ENCODE measurements at regions of chr12 and their contacts with region 1.

Region 1: GRCh38 chr12:15584366-15585041 is 204.7 kb downstream of the EPS8 start:
- DNase-seq: peak; percentile 60
- H3K4me3 ChIP-seq: no peak overlapping the region
- CTCF ChIP-seq: peak; percentile 61

Region 2: GRCh38 chr12:15494329-15495046 is 90.0 kb before region 1 on chr12:
- CTCF ChIA-PET with region 1: no interaction called
- POLR2A ChIA-PET with region 1: no interaction called
- DNase-seq: no peak
- H3K4me3 ChIP-seq: no peak overlapping the region
- CTCF ChIP-seq: no peak

Region 3: GRCh38 chr12:15540469-15540872 is 44.0 kb before region 1 on chr12:
- CTCF ChIA-PET with region 1: interaction called, 542 read pairs
- POLR2A ChIA-PET with region 1: no interaction called
- DNase-seq: no peak
- H3K4me3 ChIP-seq: no peak overlapping the region
- CTCF ChIP-seq: no peak

Region 4: DNA sequence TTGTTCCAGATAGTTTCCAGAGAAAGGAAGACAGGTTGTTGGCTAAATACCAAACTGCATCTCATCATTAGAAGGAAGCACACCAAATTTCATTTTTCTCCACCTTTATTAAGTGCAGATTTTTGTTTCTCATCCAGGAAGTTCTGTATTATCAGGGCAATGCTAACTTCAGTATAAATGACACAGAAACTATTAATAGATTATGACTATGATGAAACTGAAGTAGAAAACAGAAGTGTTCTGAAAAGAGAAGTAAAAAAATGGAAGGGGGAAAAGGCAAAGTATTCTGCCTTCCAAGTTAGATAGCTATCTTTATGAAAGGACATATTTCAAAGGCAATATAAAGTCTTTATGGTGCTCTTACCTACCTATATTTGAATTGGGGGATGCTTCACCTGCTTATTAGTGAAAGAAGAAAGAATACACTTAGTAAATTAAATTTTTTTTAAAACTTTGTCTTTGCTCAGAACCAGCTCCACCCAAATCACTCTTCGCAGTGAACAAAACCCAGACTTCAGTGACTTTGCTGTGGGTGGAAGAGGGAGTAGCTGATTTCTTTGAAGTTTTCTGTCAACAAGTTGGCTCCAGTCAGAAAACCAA is 38.3 kb before region 1 on chr12:
- CTCF ChIA-PET with region 1: interaction called, 20 read pairs
- POLR2A ChIA-PET with region 1: no interaction called
- DNase-seq: no peak
- H3K4me3 ChIP-seq: no peak overlapping the region
- CTCF ChIP-seq: no peak

Region 5: DNA sequence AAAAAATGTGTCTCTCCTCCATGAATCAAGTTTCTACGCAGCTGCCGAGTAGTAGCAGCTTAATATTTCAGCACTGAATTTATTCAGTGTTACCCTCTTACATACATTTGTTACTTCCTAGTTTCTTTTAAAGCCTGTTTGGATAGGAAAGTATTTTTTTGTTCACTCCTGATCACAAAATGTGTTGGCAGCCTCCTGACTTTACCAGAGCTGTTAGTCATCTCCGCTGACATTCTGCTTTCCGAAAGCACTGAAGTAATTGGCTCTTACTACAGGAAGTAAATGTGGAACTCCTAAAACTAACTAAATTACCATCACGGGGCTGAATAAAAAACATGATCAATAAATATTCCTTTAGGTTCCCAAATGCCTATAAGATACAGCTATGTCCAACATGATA is 20.8 kb before region 1 on chr12:
- CTCF ChIA-PET with region 1: interaction called, 110 read pairs
- POLR2A ChIA-PET with region 1: no interaction called
- DNase-seq: no peak
- H3K4me3 ChIP-seq: no peak overlapping the region
- CTCF ChIP-seq: no peak

Region 6: GRCh38 chr12:15741082-15741481 is 156.6 kb after region 1 on chr12:
- CTCF ChIA-PET with region 1: no interaction called
- POLR2A ChIA-PET with region 1: no interaction called
- DNase-seq: no peak
- H3K4me3 ChIP-seq: no peak overlapping the region
- CTCF ChIP-seq: no peak

Region 7: GRCh38 chr12:15939111-15939510 is 354.6 kb after region 1 on chr12:
- CTCF ChIA-PET with region 1: no interaction called
- POLR2A ChIA-PET with region 1: no interaction called
- DNase-seq: no peak
- H3K4me3 ChIP-seq: no peak overlapping the region
- CTCF ChIP-seq: no peak

Measured in AG04449 (cell line).